GM13976 (cell line): ENCODE measurements at regions of chr12 and their contacts with region 1.

Region 1: GRCh38 chr12:117587631-117588287 is 226.3 kb upstream of the NOS1 start:
- DNase-seq: peak; percentile 68
- CTCF ChIP-seq: peak; percentile 88

Region 2: GRCh38 chr12:117236456-117237001 is 351.2 kb before region 1 on chr12:
- in situ Hi-C with region 1: loop called (anchors 25 kb)
- DNase-seq: peak; percentile 78
- CTCF ChIP-seq: peak; percentile 57